Mammary epithelial cell (primary cell): ENCODE measurements at regions of chr1 and their contacts with region 1.

Region 1: GRCh38 chr1:82441402-82441801 is 640.7 kb downstream of the ADGRL2 start:
- DNase-seq: no peak
- H3K4me3 ChIP-seq: no peak overlapping the region
- H3K27ac ChIP-seq: no peak overlapping the region
- H3K4me1 ChIP-seq: no peaks in the 10 kb centered on the region
- H3K27me3 ChIP-seq: no peaks in the 10 kb centered on the region
- CTCF ChIP-seq: no peak

Region 2: DNA sequence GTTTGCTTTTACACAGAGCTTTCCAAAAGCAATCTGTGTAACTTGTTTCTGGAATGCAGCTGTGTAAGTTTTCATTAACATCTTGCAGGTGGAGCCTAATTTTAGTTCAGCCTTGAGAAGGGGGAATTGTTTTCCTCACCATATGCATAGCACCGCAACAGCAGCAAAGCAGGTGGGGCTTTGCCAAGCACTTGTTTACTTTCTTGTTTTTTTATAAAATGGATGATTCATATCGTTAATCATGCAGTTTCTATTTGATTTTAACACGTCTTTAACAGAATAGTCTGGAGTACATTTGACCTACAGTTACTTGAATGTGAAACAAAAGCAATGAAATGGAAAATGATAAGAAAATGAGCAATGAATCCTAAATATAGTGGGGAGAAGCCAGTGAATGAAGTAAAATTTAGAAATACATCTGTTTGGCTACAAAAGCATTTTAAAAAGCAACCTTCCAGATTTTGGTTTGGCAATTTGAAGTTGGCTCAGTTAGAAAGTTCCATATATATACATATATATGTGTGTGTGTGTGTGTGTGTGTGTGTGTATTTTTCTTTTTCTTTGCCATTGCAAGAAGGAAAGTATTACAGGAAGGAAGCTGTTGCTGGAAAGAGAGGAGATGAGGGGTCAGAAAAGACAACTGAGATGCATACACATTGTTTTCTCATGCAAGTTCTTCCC is 759.7 kb before region 1 on chr1:
- CTCF ChIA-PET with region 1: no interaction called
- dilution Hi-C with region 1: no loop called
- in situ Hi-C with region 1: no loop called
- intact Hi-C with region 1: no loop called
- DNase-seq: peak; percentile 52
- H3K4me3 ChIP-seq: no peak overlapping the region
- H3K27ac ChIP-seq: no peak overlapping the region
- H3K4me1 ChIP-seq: peaks cover 9% of the 10 kb centered on the region
- H3K27me3 ChIP-seq: no peaks in the 10 kb centered on the region
- CTCF ChIP-seq: no peak

Region 3: DNA sequence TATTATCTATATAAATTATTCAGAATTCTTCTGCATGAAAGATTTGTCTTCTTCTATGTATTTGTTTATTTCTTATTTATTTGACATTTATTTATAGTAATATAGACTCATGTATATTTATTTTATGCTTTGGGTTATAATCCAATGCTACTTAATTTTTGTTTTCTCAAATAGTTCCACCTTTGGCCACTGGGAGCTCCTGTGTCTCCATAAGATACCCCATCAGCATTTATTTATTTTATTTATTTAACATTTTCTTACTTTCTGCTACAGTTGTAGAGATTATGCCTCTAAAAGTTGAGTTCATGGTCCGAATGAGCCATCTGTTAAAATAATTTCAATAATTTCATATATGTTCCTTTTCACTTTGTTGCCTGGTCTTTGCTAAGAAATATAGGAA is 351.3 kb before region 1 on chr1:
- CTCF ChIA-PET with region 1: no interaction called
- dilution Hi-C with region 1: no loop called
- in situ Hi-C with region 1: no loop called
- intact Hi-C with region 1: loop called (anchors 10 kb)
- DNase-seq: no peak
- H3K4me3 ChIP-seq: no peak overlapping the region
- H3K27ac ChIP-seq: no peak overlapping the region
- H3K4me1 ChIP-seq: peaks cover 8% of the 10 kb centered on the region
- H3K27me3 ChIP-seq: no peaks in the 10 kb centered on the region
- CTCF ChIP-seq: peak; percentile 44 to 62